Activated naive CD4-positive, alpha-beta T cell treated with anti-CD3 and anti-CD28 coated beads for 36 hours (primary cell): ENCODE measurements at regions of chr16 and their contacts with region 1.

Region 1: DNA sequence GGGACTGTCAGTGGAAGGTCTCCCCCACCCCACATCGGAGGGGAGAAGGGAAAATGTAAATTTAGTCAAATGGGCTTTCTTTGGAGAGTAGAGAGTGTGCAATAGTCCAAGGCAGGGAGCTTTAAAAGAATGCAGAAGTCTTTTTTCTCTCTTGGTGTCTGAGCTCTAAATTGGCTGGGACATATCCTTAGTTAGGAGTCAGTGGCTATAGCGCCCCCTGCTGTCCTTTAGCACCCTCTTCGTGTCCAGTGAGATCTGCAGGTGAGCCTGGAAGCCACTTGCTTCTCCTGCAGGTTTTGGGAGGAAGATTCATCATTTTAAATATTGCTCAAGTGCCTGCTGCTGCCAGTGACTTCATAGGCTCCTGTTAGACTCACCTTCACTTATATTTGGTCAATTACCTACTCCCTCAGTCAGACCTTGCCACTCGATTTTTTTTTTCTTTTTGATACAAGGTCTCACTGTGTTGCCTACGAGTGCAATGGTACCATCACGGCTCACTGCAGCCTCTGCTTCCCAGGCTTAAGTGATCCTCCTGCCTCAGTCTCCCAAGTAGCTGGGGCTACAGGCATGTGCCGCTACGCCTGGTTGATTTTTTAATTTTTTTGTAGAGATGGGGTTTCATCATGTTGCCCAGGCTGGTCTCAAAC is 174.8 kb downstream of the PRKCB start:
- DNase-seq: peak; percentile 93
- H3K4me3 Mint-ChIP-seq: no peak overlapping the region
- H3K27ac Mint-ChIP-seq: no peak overlapping the region
- H3K4me1 Mint-ChIP-seq: peaks cover 43% of the 10 kb centered on the region
- H3K27me3 Mint-ChIP-seq: no peaks in the 10 kb centered on the region

Region 2: DNA sequence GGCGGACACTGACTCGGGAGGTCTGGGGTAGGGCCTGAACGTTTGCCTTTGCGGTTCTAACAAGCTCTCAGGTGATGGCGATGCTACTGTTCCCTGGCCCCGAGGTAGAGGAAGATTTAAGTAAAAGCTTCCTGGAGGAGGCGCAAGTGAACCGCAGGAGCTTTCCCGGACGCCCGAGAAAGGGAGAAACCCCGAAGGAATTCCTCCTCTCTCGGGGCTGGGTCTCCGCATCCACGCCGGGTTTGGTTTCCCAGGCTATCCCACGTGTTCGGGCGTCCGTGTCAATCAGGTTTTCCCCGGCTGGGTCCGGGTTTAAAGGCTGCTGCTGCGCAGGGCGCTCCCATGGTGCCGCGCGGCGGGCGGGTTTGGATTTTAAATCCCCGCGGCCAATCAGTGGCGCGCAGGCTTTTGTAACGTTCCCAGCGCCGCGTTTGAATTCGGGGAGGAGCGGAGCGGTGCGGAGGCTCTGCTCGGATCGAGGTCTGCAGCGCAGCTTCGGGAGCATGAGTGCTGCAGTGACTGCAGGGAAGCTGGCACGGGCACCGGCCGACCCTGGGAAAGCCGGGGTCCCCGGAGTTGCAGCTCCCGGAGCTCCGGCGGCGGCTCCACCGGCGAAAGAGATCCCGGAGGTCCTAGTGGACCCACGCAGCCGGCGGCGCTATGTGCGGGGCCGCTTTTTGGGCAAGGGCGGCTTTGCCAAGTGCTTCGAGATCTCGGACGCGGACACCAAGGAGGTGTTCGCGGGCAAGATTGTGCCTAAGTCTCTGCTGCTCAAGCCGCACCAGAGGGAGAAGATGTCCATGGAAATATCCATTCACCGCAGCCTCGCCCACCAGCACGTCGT is 331.9 kb before region 1 on chr16 and contains the start of gene PLK1:
- CTCF ChIA-PET with region 1: no interaction called
- intact Hi-C with region 1: loop called (anchors 1 kb)
- DNase-seq: peak; percentile 90
- H3K4me3 Mint-ChIP-seq: peak within 1 kb of the TSS; percentile 89
- H3K27ac Mint-ChIP-seq: peak within 1 kb of the TSS; percentile 30
- H3K4me1 Mint-ChIP-seq: peaks cover 16% of the 10 kb centered on the region
- H3K27me3 Mint-ChIP-seq: peaks cover 3% of the 10 kb centered on the region
- total RNA-seq, gene PLK1: 91.8 to 98.0 TPM

Region 3: DNA sequence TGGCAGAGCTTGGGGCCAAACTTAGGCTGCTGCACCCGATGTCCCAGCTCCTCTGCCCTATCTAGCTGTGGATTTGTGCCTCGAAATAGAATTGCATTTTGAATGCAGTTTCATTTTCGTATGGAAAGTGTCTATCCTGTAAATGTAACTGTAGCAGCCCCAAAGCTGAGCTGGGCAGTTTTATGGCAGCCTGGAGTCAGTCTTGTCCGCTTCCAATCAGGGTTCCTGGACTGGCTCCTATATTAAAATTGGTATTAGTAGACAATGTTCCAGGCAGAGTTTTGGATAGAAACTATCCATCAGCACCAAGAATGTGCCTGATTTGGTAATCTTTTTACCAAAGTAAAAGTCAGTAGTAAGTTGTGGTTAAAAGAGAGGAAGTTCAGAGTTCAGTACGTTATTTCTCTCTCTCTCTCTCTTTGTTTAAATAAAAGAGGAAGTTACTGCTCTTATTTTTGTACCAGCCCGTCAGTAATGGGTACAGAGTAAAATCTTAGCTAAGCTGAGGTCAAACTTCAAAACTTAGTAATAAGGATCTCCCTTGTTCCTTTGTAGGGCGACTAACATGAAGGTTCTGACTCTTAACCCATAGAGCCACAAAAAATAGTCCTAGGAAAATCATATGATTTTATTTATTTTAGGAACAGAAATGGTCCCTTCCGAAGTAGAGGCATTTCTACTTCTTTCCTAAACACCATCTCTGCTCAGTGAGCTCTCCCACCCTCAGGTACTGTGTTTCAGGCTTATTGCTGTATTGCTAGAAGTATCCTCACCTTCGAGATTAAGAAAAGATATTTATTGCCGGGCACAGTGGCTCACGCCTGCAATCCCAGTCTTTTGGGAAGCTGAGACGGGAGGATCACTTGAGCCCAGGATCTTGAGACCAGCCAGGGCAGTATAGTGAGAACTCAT is 146.8 kb before region 1 on chr16:
- CTCF ChIA-PET with region 1: interaction called, 10 read pairs
- intact Hi-C with region 1: no loop called
- DNase-seq: peak; percentile 34
- H3K4me3 Mint-ChIP-seq: peak overlapping the region; percentile 68
- H3K27ac Mint-ChIP-seq: peak overlapping the region; percentile 83
- H3K4me1 Mint-ChIP-seq: peaks cover 68% of the 10 kb centered on the region
- H3K27me3 Mint-ChIP-seq: no peaks in the 10 kb centered on the region

Region 4: DNA sequence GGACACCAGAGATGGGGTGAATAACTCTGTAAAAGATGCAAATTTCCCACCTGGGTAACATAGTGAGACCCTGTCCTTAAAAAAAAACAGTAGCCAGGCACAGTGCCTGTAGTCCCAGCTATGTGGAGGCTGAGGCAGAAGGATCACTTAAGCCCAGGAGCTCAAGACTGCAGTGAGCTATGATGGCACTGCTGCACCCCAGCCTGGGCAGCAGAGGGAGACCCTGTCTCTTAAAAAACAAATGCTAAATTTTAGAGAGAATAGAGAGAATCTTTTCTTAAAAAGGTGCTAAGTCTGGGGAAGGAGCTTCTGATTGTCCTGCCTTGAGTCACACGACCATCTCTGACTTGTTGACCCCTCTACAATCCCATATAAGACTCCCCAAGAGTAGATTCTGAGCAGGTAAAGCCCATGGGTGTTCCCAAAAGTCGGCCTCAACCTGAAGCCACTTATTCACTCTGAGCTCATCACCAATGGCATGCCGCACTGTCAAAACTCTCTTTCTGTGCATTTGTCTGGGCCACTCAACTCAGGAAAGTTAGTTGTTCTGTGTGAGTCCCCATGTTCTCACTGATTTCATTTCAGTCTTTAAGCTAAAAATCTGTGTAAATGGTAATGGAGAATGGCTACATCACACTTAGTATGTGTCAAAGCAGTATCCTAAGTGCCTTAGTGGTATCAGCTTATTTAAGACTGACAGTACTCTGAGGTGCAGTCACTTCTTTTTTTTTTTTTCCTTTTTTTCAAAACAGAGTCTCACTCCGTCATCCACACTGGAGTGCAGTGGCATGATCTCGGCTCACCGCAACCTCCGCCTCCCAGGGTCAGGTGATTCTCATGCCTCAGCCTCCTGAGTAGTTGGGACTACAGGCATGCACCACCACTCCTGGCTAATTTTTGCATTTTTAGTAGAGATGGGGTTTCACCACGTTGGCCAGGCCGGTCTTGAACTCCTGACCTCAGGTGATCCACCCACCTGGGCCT is 133.2 kb before region 1 on chr16:
- CTCF ChIA-PET with region 1: interaction called, 43 read pairs
- intact Hi-C with region 1: loop called (anchors 1 kb)
- DNase-seq: peak; percentile 52
- H3K4me3 Mint-ChIP-seq: no peak overlapping the region
- H3K27ac Mint-ChIP-seq: peak overlapping the region; percentile 55
- H3K4me1 Mint-ChIP-seq: peaks cover 69% of the 10 kb centered on the region
- H3K27me3 Mint-ChIP-seq: no peaks in the 10 kb centered on the region

Region 5: GRCh38 chr16:23952128-23952970 is 58.2 kb before region 1 on chr16:
- CTCF ChIA-PET with region 1: interaction called, 11 read pairs
- intact Hi-C with region 1: loop called (anchors 5 kb)
- DNase-seq: peak; percentile 60
- H3K4me3 Mint-ChIP-seq: peak overlapping the region; percentile 13
- H3K27ac Mint-ChIP-seq: peak overlapping the region; percentile 3
- H3K4me1 Mint-ChIP-seq: peaks cover 78% of the 10 kb centered on the region
- H3K27me3 Mint-ChIP-seq: no peaks in the 10 kb centered on the region

Region 6: GRCh38 chr16:23994615-23995014 is 15.9 kb before region 1 on chr16:
- CTCF ChIA-PET with region 1: interaction called, 11 read pairs
- intact Hi-C with region 1: no loop called
- DNase-seq: no peak
- H3K4me3 Mint-ChIP-seq: no peak overlapping the region
- H3K27ac Mint-ChIP-seq: no peak overlapping the region
- H3K4me1 Mint-ChIP-seq: peaks cover 9% of the 10 kb centered on the region
- H3K27me3 Mint-ChIP-seq: no peaks in the 10 kb centered on the region

Region 7: DNA sequence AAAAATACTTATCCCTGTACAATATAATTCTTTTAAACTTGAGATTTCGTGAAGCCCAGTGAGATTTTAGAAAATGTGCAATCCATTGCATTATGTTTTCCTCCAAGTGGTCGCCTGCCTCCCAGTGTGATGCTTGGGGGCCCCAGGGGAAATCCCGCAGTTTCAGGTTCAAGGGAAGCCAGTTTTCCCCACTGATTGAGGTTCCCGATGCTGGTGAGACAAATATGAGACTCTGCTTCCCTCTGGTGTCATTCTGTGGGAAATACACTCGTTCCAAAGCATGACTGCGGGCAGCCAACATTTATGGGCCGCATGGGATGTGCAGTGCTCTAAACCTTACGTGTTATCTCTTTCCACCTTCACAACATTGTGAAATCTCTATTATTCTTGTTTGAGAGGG is 26.0 kb after region 1 on chr16:
- CTCF ChIA-PET with region 1: interaction called, 21 read pairs
- intact Hi-C with region 1: loop called (anchors 2 kb)
- DNase-seq: peak; percentile 56
- H3K4me3 Mint-ChIP-seq: no peak overlapping the region
- H3K27ac Mint-ChIP-seq: no peak overlapping the region
- H3K4me1 Mint-ChIP-seq: peaks cover 22% of the 10 kb centered on the region
- H3K27me3 Mint-ChIP-seq: no peaks in the 10 kb centered on the region

Region 8: GRCh38 chr16:24538756-24539290 is 528.3 kb after region 1 on chr16:
- CTCF ChIA-PET with region 1: no interaction called
- intact Hi-C with region 1: no loop called
- DNase-seq: no peak
- H3K4me3 Mint-ChIP-seq: peak overlapping the region; percentile 99
- H3K27ac Mint-ChIP-seq: peak overlapping the region; percentile 100
- H3K4me1 Mint-ChIP-seq: peaks cover 23% of the 10 kb centered on the region
- H3K27me3 Mint-ChIP-seq: no peaks in the 10 kb centered on the region